ENCODE measurements at regions of chr9 and their contacts with region 1.

Region 1: DNA sequence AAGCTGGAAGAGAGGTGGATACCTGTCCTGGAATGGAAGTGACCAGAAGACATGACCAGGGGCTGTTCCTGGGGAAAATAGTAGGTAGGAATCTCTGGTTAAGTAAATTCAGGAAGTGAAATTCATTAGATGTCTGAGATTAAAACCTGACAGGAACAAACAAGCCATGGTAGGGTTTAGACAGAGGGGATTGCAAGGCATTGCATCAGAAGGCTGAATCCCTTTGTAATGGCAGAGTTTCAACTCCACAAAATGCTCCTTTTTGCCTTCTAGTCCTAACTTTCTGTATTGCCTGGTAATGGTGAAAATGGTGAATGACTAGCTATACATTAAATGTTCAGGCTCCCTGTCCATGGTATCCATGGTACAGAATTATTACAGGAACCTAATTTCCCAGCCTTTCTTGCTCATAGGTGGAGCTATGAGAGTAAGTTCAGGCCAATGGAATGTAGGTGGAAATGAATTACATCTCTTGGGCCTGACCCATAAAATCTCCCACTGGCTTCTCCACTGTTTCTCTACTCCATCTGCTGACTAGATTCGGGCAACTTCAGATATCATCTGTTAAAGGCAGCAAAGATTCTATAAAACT is 113.4 kb upstream of the CNTLN start:
- DNase-seq: no peak
- H3K4me3 ChIP-seq: no peak overlapping the region
- H3K27ac ChIP-seq: no peak overlapping the region
- H3K4me1 ChIP-seq: peaks cover 0 to 23% (median 12%) of the 10 kb centered on the region in 4 donors
- H3K27me3 ChIP-seq: no peaks in the 10 kb centered on the region
- CTCF ChIP-seq: no peak
- EP300 ChIP-seq: no peak
- POLR2A ChIP-seq: no peak

Region 2: GRCh38 chr9:16671591-16672137 is 349.8 kb before region 1 on chr9:
- intact Hi-C with region 1: no loop called
- DNase-seq: no peak
- H3K4me3 ChIP-seq: no peak overlapping the region
- H3K27ac ChIP-seq: no peak overlapping the region
- H3K4me1 ChIP-seq: peaks cover 0 to 16% (median 12%) of the 10 kb centered on the region in 4 donors
- H3K27me3 ChIP-seq: no peaks in the 10 kb centered on the region
- CTCF ChIP-seq: no peak
- EP300 ChIP-seq: no peak
- POLR2A ChIP-seq: no peak

Region 3: DNA sequence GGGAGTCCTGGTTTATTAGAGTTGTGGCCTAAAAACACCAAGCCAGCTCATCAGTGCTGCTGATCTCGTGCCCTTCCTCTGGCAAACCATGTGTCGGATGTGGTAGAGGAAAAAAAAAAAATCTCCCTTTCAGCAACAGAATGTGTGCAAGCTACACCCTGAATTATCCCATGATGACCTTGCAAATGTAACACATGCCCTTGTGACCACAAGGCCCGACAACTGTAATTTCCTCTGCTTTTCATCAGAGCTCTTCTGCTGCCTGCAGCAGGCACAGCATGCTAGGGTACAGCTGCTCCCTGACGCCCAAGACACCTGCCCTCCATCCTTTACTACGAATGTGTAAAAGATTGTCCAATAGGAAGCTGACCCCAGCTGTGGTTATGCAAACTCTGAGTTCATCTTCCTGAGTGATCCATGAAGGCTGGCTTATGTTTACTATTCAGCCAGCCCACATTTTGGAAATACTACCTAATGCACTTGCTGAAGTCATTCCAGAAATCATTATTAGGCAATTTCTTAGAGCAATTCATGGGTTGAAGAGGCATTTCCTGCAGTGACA is 136.4 kb before region 1 on chr9:
- intact Hi-C with region 1: loop called (anchors 10 kb)
- DNase-seq: no peak
- H3K4me3 ChIP-seq: no peak overlapping the region
- H3K27ac ChIP-seq: peak overlapping the region in 3 of 4 donors; percentile 35 to 63 (median 62)
- H3K4me1 ChIP-seq: peaks cover 0 to 17% (median 14%) of the 10 kb centered on the region in 4 donors
- H3K27me3 ChIP-seq: no peaks in the 10 kb centered on the region
- CTCF ChIP-seq: no peak
- EP300 ChIP-seq: no peak
- POLR2A ChIP-seq: no peak

Region 4: GRCh38 chr9:17065062-17065461 is 43.6 kb after region 1 on chr9:
- intact Hi-C with region 1: no loop called
- DNase-seq: no peak
- H3K4me3 ChIP-seq: no peak overlapping the region
- H3K27ac ChIP-seq: no peak overlapping the region
- H3K4me1 ChIP-seq: no peaks in the 10 kb centered on the region
- H3K27me3 ChIP-seq: no peaks in the 10 kb centered on the region
- CTCF ChIP-seq: no peak
- EP300 ChIP-seq: no peak
- POLR2A ChIP-seq: no peak

Measured in esophagus muscularis mucosa (tissue), 4 donors.